Heart left ventricle (tissue), 16 donors: ENCODE measurements at regions of chr11 and their contacts with region 1.

Region 1: DNA sequence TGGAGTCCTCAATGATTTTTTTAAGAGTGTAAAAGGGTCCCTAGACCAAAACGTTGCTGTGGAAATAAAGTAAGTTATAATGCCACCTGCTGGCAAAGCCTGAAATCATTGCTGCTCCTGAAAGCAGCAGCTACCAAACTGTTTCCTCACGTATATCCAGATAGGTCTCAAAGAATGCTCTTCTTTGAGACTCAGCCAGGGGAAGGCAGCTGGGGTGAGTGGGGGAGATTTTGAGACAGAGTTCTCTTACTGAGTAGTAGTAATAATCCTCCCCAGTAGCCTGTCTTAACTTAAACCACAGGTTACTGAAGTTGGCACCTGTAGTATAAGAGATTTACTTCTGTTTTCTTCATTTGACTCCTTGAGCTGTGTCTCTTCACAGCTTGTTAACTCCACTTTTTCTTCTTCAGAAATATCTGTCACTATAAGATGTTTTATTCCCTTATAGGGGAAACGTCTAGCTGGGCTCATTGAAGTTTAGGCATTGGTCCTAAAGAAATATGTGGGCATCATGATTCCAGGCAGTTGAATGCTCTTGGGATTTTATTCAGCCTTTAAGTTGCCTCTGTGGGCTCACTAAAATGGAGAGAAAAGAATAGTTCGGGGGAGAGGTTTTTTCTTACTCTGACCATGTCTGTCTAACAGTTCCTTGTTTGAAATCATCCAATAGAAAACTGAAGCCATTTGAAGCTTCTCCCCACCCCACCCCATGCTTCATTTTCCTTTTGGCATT is 77.9 kb downstream of the BTBD10 start:
- DNase-seq: no peak
- ATAC-seq: no peak
- H3K4me3 ChIP-seq: no peak overlapping the region
- H3K27ac ChIP-seq: peak overlapping the region in 1 of 12 donors; percentile 15
- H3K4me1 ChIP-seq: peaks cover 0 to 12% (median 5%) of the 10 kb centered on the region in 12 donors
- H3K27me3 ChIP-seq: no peaks in the 10 kb centered on the region
- CTCF ChIP-seq: peak; percentile 43 to 76 (median 60)
- POLR2A ChIP-seq: no peak

Region 2: DNA sequence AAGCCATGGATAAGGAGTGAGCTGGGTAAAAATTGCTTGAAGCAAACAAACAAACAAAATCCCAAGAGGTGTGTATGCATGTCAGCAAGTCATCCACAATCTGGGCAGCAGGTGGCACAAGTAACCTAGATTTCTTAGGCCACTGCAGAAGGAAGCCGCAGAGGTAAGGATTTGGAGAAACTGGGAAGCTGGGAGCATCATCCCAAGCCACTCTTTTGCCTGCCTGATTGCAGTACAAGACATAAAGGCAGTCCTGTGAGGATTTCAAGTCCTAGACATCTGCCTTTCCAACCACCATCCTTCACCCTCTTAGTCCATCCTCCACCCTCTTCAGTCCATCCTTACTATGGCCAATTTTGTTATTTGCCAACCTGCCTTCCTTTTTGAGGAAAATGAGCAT is 174.7 kb before region 1 on chr11:
- intact Hi-C with region 1: loop called in 1 of 10 experiments (anchors 5 kb)
- DNase-seq: peak in 4 of 5 donors; percentile 39 to 58 (median 52)
- ATAC-seq: peak in 3 of 4 donors; percentile 78 to 79 (median 78)
- H3K4me3 ChIP-seq: no peak overlapping the region
- H3K27ac ChIP-seq: no peak overlapping the region
- H3K4me1 ChIP-seq: peaks cover 0 to 28% (median 5%) of the 10 kb centered on the region in 12 donors
- H3K27me3 ChIP-seq: no peaks in the 10 kb centered on the region
- CTCF ChIP-seq: peak; percentile 30 to 73 (median 62)
- POLR2A ChIP-seq: no peak

Region 3: GRCh38 chr11:13276832-13277767 is 108.0 kb before region 1 on chr11:
- intact Hi-C with region 1: no loop called
- DNase-seq: peak; percentile 98 to 99 (median 99)
- ATAC-seq: peak; percentile 95 to 98 (median 98)
- H3K4me3 ChIP-seq: peak overlapping the region; percentile 84 to 99 (median 96)
- H3K27ac ChIP-seq: peak overlapping the region; percentile 37 to 95 (median 90)
- H3K4me1 ChIP-seq: peaks cover 0 to 33% (median 19%) of the 10 kb centered on the region in 12 donors
- H3K27me3 ChIP-seq: peaks cover 0 to 11% (median 0%) of the 10 kb centered on the region in 9 donors
- CTCF ChIP-seq: peak in 1 of 12 donors; percentile 6
- POLR2A ChIP-seq: peak; percentile 67 to 77

Region 4: DNA sequence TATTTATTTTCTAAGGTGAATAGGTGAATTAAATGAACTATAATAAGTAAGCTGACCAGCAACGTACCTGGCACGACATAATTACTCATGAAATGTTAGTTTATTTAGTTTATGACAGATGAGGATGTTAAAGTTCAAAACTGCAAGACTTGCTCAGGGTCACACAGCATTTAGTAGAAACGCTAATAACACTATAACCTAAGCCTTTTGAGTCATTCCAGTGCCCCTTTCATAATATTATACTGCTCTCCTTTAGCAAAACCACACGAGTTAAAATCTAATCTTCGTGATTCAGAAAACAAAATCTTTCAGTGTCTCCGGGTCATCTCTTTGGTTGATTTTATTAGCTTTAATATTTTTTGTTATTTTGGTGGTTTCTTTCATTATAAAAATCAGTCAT is 38.3 kb after region 1 on chr11:
- intact Hi-C with region 1: loop called in 1 of 10 experiments (anchors 2 kb)
- DNase-seq: no peak
- ATAC-seq: no peak
- H3K4me3 ChIP-seq: no peak overlapping the region
- H3K27ac ChIP-seq: no peak overlapping the region
- H3K4me1 ChIP-seq: peaks cover 0 to 4% (median 0%) of the 10 kb centered on the region in 12 donors
- H3K27me3 ChIP-seq: no peaks in the 10 kb centered on the region
- CTCF ChIP-seq: no peak
- POLR2A ChIP-seq: no peak

Region 5: DNA sequence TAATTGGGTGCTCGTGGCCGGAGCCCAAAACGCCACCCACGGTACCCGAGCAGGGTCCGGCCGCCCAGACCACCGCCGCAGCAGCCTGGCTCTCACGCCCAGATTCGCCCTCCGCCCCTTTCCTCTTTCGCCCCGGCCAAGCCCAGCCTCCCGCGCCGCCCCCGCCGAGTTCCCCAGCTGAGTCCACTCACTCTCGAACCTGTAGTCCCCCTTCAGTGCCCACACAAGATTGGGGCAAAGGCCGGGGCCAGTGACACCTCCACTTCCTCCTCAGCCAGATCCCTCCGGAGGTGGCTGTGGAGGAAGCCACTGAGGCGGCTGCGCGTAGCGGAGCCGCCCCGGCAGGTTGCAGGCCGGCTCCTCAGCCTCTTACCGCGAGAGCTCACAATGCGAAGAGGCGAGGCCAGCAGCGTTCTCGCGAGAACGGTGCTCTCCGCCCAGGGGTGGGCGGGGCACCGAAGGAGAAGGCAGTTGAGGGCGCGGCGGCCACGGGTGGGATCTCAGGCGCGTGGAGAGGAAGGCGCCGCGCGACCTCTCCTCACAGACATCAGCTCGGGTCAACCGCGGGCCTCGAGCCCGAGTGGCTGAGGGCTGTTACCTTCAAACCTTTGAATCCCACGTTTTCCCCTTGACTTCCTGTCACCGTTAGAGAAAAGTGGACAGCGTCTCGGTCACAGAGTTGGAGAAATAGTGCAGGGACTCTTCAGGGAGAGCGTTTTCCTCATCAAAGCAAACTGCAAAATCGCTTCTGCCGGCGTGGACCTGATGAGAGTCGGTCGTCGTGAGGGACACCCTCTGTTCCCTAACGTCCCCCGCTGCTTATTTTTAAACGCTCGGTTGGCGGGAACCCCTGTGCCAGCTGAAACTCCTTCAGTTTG is 78.1 kb after region 1 on chr11 and contains the start of gene BTBD10:
- intact Hi-C with region 1: loop called in 3 of 10 experiments (anchors 5 to 10 kb)
- DNase-seq: peak; percentile 94 to 97 (median 96)
- ATAC-seq: peak; percentile 97 to 100 (median 99)
- H3K4me3 ChIP-seq: peak within 1 kb of the TSS; percentile 68 to 94 (median 80)
- H3K27ac ChIP-seq: peak within 1 kb of the TSS; percentile 61 to 94 (median 89)
- H3K4me1 ChIP-seq: peaks cover 0 to 39% (median 13%) of the 10 kb centered on the region in 12 donors
- H3K27me3 ChIP-seq: no peaks in the 10 kb centered on the region
- CTCF ChIP-seq: peak in 1 of 12 donors; percentile 8
- POLR2A ChIP-seq: peak in 1 of 2 donors; percentile 92
- total RNA-seq, gene BTBD10: 22.6 to 31.4 (median 25.8) TPM